ENCODE measurements at regions of chr6 and their contacts with region 1.

Region 1: GRCh38 chr6:72622094-72622940 is 453 bp downstream of the KCNQ5 start:
- DNase-seq: no peak

Region 2: GRCh38 chr6:72689107-72689954 is 67.0 kb after region 1 on chr6:
- intact Hi-C with region 1: no loop called
- DNase-seq: no peak

Region 3: GRCh38 chr6:72792692-72793091 is 170.4 kb after region 1 on chr6:
- intact Hi-C with region 1: loop called in 1 of 2 experiments (anchors 5 kb)
- DNase-seq: no peak